ENCODE measurements at regions of chr9 and their contacts with region 1.

Region 1: DNA sequence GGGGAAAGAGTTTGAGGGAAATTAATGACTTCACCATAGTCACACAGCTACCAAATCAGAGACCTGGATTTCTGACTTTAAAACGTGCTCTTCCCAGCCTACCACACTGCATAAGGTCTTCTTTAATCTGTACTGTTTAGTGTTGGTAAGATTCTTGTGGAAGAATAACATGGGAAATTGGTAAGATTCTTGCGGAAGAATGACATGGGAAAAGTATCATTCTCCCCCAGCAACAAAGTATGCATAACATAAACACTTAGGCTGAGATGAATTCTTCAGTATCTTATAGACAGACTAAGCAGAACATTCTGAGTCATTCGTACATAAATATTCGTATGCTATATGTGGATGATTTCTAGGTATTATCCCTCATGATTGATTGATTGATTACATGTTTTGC is 170.4 kb downstream of the FOCAD start:
- DNase-seq: no peak
- H3K4me3 ChIP-seq: no peak overlapping the region
- H3K27ac ChIP-seq: no peak overlapping the region
- H3K4me1 ChIP-seq: no peaks in the 10 kb centered on the region
- H3K27me3 ChIP-seq: no peaks in the 10 kb centered on the region
- CTCF ChIP-seq: no peak
- POLR2A ChIP-seq: no peak

Region 2: GRCh38 chr9:19934301-19934868 is 920.1 kb before region 1 on chr9:
- intact Hi-C with region 1: loop called (anchors 10 kb)
- DNase-seq: no peak
- H3K4me3 ChIP-seq: peak overlapping the region; percentile 48 to 61 (median 49)
- H3K27ac ChIP-seq: no peak overlapping the region
- H3K4me1 ChIP-seq: no peaks in the 10 kb centered on the region
- H3K27me3 ChIP-seq: no peaks in the 10 kb centered on the region
- CTCF ChIP-seq: no peak
- POLR2A ChIP-seq: no peak

Region 3: GRCh38 chr9:20490246-20490834 is 364.1 kb before region 1 on chr9:
- intact Hi-C with region 1: loop called (anchors 10 kb)
- DNase-seq: no peak
- H3K4me3 ChIP-seq: no peak overlapping the region
- H3K27ac ChIP-seq: no peak overlapping the region
- H3K4me1 ChIP-seq: no peaks in the 10 kb centered on the region
- H3K27me3 ChIP-seq: no peaks in the 10 kb centered on the region
- CTCF ChIP-seq: no peak
- POLR2A ChIP-seq: no peak

Measured in breast epithelium (tissue), 4 donors.